ENCODE measurements at regions of chr1 and their contacts with region 1.

Region 1: DNA sequence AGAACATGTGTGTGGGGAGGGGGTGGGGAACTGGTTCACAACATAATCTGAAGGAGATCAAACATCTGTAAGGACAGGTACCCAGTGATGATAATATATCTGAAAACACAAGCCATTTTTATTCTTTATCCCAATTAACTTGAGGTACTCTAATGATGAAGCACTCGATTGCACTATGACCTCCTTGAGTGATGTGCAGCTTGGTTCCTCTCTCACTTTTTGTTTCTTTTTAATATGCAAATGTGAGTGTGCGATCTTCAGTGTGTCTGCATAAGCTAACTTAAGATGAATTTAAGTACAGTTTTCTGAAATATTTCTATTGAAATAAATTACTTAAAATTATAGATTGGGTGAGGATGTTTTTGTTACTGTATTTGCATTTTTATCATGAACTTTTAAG is 50.6 kb upstream of the ANGPTL1 start:
- DNase-seq: peak; percentile 46
- ATAC-seq: peak; percentile 50
- H3K4me3 ChIP-seq: no peak overlapping the region
- H3K4me3 Mint-ChIP-seq: no peak overlapping the region
- H3K27ac ChIP-seq: peak overlapping the region in 1 of 2 donors; percentile 37
- H3K27ac Mint-ChIP-seq: peak overlapping the region; percentile 43
- H3K4me1 ChIP-seq: peaks cover 11 to 38% of the 10 kb centered on the region in 2 donors
- H3K4me1 Mint-ChIP-seq: peaks cover 72% of the 10 kb centered on the region
- H3K27me3 ChIP-seq: no peaks in the 10 kb centered on the region
- H3K27me3 Mint-ChIP-seq: no peaks in the 10 kb centered on the region
- CTCF ChIP-seq: no peak

Region 2: GRCh38 chr1:178908358-178908757 is 13.1 kb before region 1 on chr1:
- CTCF ChIA-PET with region 1: no interaction called
- POLR2A ChIA-PET with region 1: interaction called, 6 read pairs
- intact Hi-C with region 1: loop called (anchors 2 kb)
- DNase-seq: no peak
- ATAC-seq: no peak
- H3K4me3 ChIP-seq: no peak overlapping the region
- H3K4me3 Mint-ChIP-seq: no peak overlapping the region
- H3K27ac ChIP-seq: no peak overlapping the region
- H3K27ac Mint-ChIP-seq: peak overlapping the region; percentile 55
- H3K4me1 ChIP-seq: peaks cover 0 to 4% of the 10 kb centered on the region in 2 donors
- H3K4me1 Mint-ChIP-seq: peaks cover 53% of the 10 kb centered on the region
- H3K27me3 ChIP-seq: no peaks in the 10 kb centered on the region
- H3K27me3 Mint-ChIP-seq: no peaks in the 10 kb centered on the region
- CTCF ChIP-seq: no peak

Region 3: DNA sequence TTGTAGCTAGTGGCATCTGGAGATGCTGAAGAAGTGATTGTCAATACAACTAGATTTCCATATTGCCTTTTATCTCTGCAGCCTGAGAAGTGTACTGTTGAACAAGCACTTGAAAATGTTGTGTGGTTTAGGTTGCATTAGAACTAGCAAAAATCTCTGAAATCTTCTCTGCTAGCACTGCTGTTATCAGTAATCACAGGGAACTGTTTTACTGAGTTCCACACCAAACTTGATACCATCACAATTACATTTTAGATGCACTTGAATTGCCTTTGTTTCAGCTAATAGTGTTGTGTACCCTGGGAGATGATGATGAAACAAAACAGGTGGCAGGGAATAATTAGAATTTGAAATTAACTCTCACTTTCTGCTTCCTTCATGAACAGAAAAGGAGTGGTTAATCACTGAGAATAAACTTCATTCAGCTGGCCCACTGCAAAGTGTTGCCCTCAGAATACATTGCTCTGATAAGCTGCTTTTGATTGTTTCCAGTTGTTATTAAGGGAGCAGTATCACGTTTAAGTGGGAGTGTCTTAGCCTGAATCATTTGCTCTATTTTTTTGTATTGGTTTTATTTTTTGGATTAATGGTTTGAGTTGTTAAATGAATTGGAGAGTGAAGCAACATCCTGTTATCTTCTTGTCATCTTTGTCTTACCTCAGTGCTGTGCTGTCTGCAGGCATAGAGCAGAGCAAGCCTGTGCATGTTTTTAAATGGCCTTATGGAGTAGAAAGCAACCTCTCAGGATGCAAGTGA is 117.2 kb after region 1 on chr1:
- CTCF ChIA-PET with region 1: no interaction called
- POLR2A ChIA-PET with region 1: no interaction called
- intact Hi-C with region 1: no loop called
- DNase-seq: no peak
- ATAC-seq: no peak
- H3K4me3 ChIP-seq: no peak overlapping the region
- H3K4me3 Mint-ChIP-seq: no peak overlapping the region
- H3K27ac ChIP-seq: no peak overlapping the region
- H3K27ac Mint-ChIP-seq: peak overlapping the region; percentile 24
- H3K4me1 ChIP-seq: peaks cover 27 to 39% of the 10 kb centered on the region in 2 donors
- H3K4me1 Mint-ChIP-seq: peaks cover 55% of the 10 kb centered on the region
- H3K27me3 ChIP-seq: no peaks in the 10 kb centered on the region
- H3K27me3 Mint-ChIP-seq: no peaks in the 10 kb centered on the region
- CTCF ChIP-seq: no peak